Gastrocnemius medialis (tissue), 4 donors: ENCODE measurements at regions of chr16 and their contacts with region 1.

Region 1: GRCh38 chr16:88452482-88453216 is 431 bp upstream of the ZFPM1 start:
- DNase-seq: peak; percentile 90 to 94
- ATAC-seq: peak; percentile 92 to 93
- H3K4me3 ChIP-seq: peak overlapping the region; percentile 58 to 75 (median 61)
- H3K27ac ChIP-seq: peak overlapping the region; percentile 60 to 76 (median 72)
- H3K4me1 ChIP-seq: peaks cover 5 to 26% of the 10 kb centered on the region in 2 donors
- H3K27me3 ChIP-seq: peaks cover 20 to 39% (median 31%) of the 10 kb centered on the region in 3 donors
- CTCF ChIP-seq: no peak
- POLR2A ChIP-seq: no peak

Region 2: GRCh38 chr16:86722970-86723369 is 1729.7 kb before region 1 on chr16:
- in situ Hi-C with region 1: no loop called
- intact Hi-C with region 1: no loop called
- DNase-seq: no peak
- ATAC-seq: no peak
- H3K4me3 ChIP-seq: no peak overlapping the region
- H3K27ac ChIP-seq: no peak overlapping the region
- H3K4me1 ChIP-seq: peaks cover 0 to 11% of the 10 kb centered on the region in 2 donors
- H3K27me3 ChIP-seq: no peaks in the 10 kb centered on the region
- CTCF ChIP-seq: no peak
- POLR2A ChIP-seq: no peak

Region 3: GRCh38 chr16:88315543-88316105 is 137.0 kb before region 1 on chr16:
- in situ Hi-C with region 1: no loop called
- intact Hi-C with region 1: no loop called
- DNase-seq: no peak
- ATAC-seq: no peak
- H3K4me3 ChIP-seq: no peak overlapping the region
- H3K27ac ChIP-seq: no peak overlapping the region
- H3K4me1 ChIP-seq: no peaks in the 10 kb centered on the region
- H3K27me3 ChIP-seq: peaks cover 0 to 8% (median 0%) of the 10 kb centered on the region in 3 donors
- CTCF ChIP-seq: no peak
- POLR2A ChIP-seq: no peak

Region 4: DNA sequence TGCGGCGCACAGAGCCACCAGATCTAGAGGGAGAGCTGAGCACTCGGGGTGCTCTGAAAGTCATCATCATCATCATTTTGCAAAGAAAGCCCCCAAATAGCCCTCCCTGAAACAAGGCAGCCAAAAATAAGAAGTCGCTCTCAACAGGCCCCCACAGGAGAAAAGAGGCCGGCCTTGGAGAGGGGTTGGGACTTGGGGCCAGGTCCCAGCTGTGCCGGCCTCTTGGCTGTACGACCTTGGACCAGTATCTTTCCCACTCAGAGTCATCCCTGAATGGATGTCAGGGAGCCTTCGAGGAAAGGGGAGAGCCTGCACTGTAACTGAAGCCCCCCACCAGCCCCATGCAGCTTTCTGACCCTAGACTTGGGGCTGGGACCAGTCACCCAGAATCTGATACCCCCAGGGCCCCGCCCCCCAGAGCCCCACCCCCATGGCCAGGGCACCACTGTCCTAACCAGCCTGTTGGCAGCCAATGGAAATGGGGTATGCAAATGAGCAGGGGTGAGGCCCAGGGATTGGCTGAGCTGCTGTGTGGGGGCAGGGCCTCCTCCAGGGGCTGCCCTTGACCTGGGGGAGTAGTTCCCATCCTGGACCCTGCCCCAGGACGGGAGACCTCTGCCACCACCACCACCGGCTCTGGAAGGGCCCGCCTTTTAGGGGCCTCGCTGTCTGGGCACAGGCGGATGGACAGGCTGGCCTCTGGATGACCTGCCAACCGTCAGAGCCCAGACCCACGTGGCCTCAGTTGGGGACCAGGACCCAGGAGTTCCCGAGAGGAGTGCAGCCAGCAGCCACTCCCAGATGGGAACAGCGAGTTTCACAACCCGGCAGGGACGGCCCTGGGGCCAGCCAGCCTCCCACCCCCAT is 15.9 kb after region 1 on chr16:
- in situ Hi-C with region 1: no loop called
- intact Hi-C with region 1: no loop called
- DNase-seq: peak in 1 of 2 donors; percentile 23
- ATAC-seq: peak in 1 of 2 donors; percentile 64
- H3K4me3 ChIP-seq: no peak overlapping the region
- H3K27ac ChIP-seq: no peak overlapping the region
- H3K4me1 ChIP-seq: no peaks in the 10 kb centered on the region
- H3K27me3 ChIP-seq: peaks cover 0 to 7% (median 4%) of the 10 kb centered on the region in 3 donors
- CTCF ChIP-seq: no peak
- POLR2A ChIP-seq: no peak

Region 5: GRCh38 chr16:88662843-88663606 is 210.4 kb after region 1 on chr16 and contains the start of gene MVD:
- in situ Hi-C with region 1: no loop called
- intact Hi-C with region 1: loop called (anchors 5 kb)
- DNase-seq: peak; percentile 97
- ATAC-seq: peak; percentile 96 to 98
- H3K4me3 ChIP-seq: peak within 1 kb of the TSS; percentile 74 to 98 (median 82)
- H3K27ac ChIP-seq: peak within 1 kb of the TSS; percentile 86 to 90 (median 90)
- H3K4me1 ChIP-seq: peaks cover 15 to 23% of the 10 kb centered on the region in 2 donors
- H3K27me3 ChIP-seq: no peaks in the 10 kb centered on the region
- CTCF ChIP-seq: no peak
- POLR2A ChIP-seq: peak; percentile 90 to 92
- total RNA-seq, gene MVD: 9.0 to 16.3 (median 13.4) TPM

Region 6: GRCh38 chr16:88785106-88785924 is 332.7 kb after region 1 on chr16 and contains the start of gene PIEZO1:
- in situ Hi-C with region 1: no loop called
- intact Hi-C with region 1: no loop called
- DNase-seq: no peak
- ATAC-seq: peak; percentile 48 to 51
- H3K4me3 ChIP-seq: peak within 1 kb of the TSS; percentile 50 to 73 (median 65)
- H3K27ac ChIP-seq: peak within 1 kb of the TSS; percentile 66 to 74 (median 72)
- H3K4me1 ChIP-seq: peaks cover under 1 to 7% of the 10 kb centered on the region in 2 donors
- H3K27me3 ChIP-seq: peaks cover 10 to 14% (median 10%) of the 10 kb centered on the region in 3 donors
- CTCF ChIP-seq: peak; percentile 53 to 83 (median 71)
- POLR2A ChIP-seq: peak; percentile 41 to 45
- total RNA-seq, gene PIEZO1: 9.0 to 37.0 (median 16.5) TPM